ENCODE measurements at regions of chr14 and their contacts with region 1.

Region 1: DNA sequence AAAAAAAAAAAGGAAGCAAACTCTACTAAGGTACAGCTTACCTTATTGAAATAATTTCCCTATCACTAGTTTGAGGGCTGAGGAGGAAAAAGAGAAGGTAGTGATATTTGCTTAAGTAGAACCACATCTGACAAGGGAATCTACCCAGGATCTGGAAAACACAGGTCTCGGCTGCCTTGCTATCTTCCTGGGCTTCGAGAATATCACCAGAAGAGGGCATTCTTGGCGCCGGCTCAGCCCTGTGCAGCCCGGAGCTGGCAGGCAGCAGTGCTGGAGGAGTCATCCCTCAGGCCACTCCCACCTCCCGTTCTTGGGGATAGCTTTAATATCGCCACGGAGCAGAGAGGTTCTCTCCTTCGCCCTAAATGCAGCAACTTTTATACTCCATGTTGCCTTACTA is 1181.2 kb downstream of the VRK1 start:
- DNase-seq: peak; percentile 80
- ATAC-seq: peak; percentile 100
- H3K4me3 Mint-ChIP-seq: peak overlapping the region; percentile 67
- H3K27ac Mint-ChIP-seq: no peak overlapping the region
- H3K4me1 Mint-ChIP-seq: peaks cover 14% of the 10 kb centered on the region
- H3K27me3 Mint-ChIP-seq: peaks cover 7% of the 10 kb centered on the region; the same call in 1 of the 2 replicates
- CTCF ChIP-seq: no peak

Region 2: GRCh38 chr14:97930166-97930565 is 48.2 kb before region 1 on chr14:
- CTCF ChIA-PET with region 1: no interaction called
- POLR2A ChIA-PET with region 1: no interaction called
- DNase-seq: no peak
- ATAC-seq: no peak
- H3K4me3 Mint-ChIP-seq: no peak overlapping the region
- H3K27ac Mint-ChIP-seq: no peak overlapping the region
- H3K4me1 Mint-ChIP-seq: no peaks in the 10 kb centered on the region
- H3K27me3 Mint-ChIP-seq: no peaks in the 10 kb centered on the region
- CTCF ChIP-seq: no peak

Region 3: GRCh38 chr14:98022541-98023520 is 44.5 kb after region 1 on chr14:
- CTCF ChIA-PET with region 1: interaction called, 10 read pairs
- POLR2A ChIA-PET with region 1: no interaction called
- DNase-seq: peak; percentile 10
- ATAC-seq: peak; percentile 83
- H3K4me3 Mint-ChIP-seq: peak overlapping the region; percentile 18
- H3K27ac Mint-ChIP-seq: no peak overlapping the region
- H3K4me1 Mint-ChIP-seq: peaks cover 16% of the 10 kb centered on the region
- H3K27me3 Mint-ChIP-seq: no peaks in the 10 kb centered on the region
- CTCF ChIP-seq: no peak

Region 4: GRCh38 chr14:98138666-98139065 is 160.3 kb after region 1 on chr14:
- CTCF ChIA-PET with region 1: interaction called, 12 read pairs
- POLR2A ChIA-PET with region 1: no interaction called
- DNase-seq: peak; percentile 67
- ATAC-seq: peak; percentile 85
- H3K4me3 Mint-ChIP-seq: no peak overlapping the region
- H3K27ac Mint-ChIP-seq: no peak overlapping the region
- H3K4me1 Mint-ChIP-seq: peaks cover 32% of the 10 kb centered on the region
- H3K27me3 Mint-ChIP-seq: no peaks in the 10 kb centered on the region
- CTCF ChIP-seq: peak; percentile 73